Activated CD8-positive, alpha-beta T cell treated with anti-CD3 and anti-CD28 coated beads, Interleukin-2, amount 10 ng/mL, durations not matched to agents 7 days and 5 days (primary cell): ENCODE measurements at regions of chr17 and their contacts with region 1.

Region 1: GRCh38 chr17:15502369-15503112 is 35.1 kb upstream of the CDRT4 start:
- DNase-seq: peak; percentile 79
- ATAC-seq: peak; percentile 91
- H3K4me3 Mint-ChIP-seq: no peak overlapping the region
- H3K27ac Mint-ChIP-seq: no peak overlapping the region
- H3K4me1 Mint-ChIP-seq: peaks cover 9% of the 10 kb centered on the region
- H3K27me3 Mint-ChIP-seq: no peaks in the 10 kb centered on the region

Region 2: GRCh38 chr17:15247891-15248529 is 254.5 kb before region 1 on chr17:
- CTCF ChIA-PET with region 1: interaction called, 12 read pairs
- POLR2A ChIA-PET with region 1: no interaction called
- DNase-seq: no peak
- ATAC-seq: no peak
- H3K4me3 Mint-ChIP-seq: no peak overlapping the region
- H3K27ac Mint-ChIP-seq: no peak overlapping the region
- H3K4me1 Mint-ChIP-seq: no peaks in the 10 kb centered on the region
- H3K27me3 Mint-ChIP-seq: peaks cover 6% of the 10 kb centered on the region

Region 3: GRCh38 chr17:15257258-15257788 is 245.2 kb before region 1 on chr17:
- CTCF ChIA-PET with region 1: interaction called, 33 read pairs
- POLR2A ChIA-PET with region 1: no interaction called
- DNase-seq: peak; percentile 73
- ATAC-seq: peak; percentile 54
- H3K4me3 Mint-ChIP-seq: no peak overlapping the region
- H3K27ac Mint-ChIP-seq: no peak overlapping the region
- H3K4me1 Mint-ChIP-seq: peaks cover 30% of the 10 kb centered on the region
- H3K27me3 Mint-ChIP-seq: peaks cover 54% of the 10 kb centered on the region

Region 4: DNA sequence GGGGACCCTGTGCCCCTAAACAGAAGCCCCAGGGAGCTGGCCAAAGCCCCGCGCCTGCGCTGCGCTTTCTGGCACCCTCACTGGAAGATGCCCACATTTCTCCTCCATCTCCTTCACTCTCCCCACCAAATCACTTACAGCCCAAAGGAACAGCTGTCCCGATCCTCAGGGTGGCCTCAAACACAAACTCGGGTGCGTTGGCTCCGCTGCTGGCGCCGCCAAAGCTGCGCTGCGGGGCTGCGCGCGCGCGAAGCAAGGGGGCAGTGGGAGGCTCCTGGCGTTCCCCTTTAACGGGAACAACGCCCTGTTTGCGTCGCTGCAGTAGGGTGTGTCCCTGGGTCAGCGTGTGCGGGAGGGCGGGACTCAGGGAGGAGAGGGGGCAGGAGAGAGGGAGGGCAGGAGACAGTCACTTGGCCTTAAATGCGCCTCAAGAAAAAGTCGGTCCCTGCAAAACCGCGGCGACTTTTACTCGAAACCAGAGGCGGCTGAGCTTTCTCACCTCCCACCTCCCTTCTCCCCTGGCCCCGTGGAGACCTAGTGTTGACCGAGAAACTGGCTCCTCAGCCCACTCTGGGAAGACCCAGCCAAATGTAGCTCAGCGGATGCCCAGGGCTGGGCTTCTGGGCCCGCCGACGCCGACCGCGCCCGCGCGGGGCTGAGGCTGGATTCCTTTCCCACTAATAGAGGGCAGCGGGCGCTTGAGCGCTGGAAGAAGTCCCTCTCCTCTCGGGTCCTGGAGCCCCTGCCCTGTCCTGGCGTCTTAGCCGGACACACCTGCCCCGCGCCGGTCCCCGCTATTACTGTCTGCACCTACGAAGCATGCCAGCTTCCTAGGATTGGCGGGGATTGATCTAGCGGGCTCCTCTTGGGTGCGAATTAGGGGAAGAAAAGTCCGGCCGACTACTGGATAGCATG is 240.0 kb before region 1 on chr17:
- CTCF ChIA-PET with region 1: interaction called, 33 read pairs
- POLR2A ChIA-PET with region 1: no interaction called
- DNase-seq: no peak
- ATAC-seq: no peak
- H3K4me3 Mint-ChIP-seq: peak overlapping the region; percentile 22
- H3K27ac Mint-ChIP-seq: no peak overlapping the region
- H3K4me1 Mint-ChIP-seq: peaks cover 24% of the 10 kb centered on the region
- H3K27me3 Mint-ChIP-seq: peaks cover 68% of the 10 kb centered on the region

Region 5: DNA sequence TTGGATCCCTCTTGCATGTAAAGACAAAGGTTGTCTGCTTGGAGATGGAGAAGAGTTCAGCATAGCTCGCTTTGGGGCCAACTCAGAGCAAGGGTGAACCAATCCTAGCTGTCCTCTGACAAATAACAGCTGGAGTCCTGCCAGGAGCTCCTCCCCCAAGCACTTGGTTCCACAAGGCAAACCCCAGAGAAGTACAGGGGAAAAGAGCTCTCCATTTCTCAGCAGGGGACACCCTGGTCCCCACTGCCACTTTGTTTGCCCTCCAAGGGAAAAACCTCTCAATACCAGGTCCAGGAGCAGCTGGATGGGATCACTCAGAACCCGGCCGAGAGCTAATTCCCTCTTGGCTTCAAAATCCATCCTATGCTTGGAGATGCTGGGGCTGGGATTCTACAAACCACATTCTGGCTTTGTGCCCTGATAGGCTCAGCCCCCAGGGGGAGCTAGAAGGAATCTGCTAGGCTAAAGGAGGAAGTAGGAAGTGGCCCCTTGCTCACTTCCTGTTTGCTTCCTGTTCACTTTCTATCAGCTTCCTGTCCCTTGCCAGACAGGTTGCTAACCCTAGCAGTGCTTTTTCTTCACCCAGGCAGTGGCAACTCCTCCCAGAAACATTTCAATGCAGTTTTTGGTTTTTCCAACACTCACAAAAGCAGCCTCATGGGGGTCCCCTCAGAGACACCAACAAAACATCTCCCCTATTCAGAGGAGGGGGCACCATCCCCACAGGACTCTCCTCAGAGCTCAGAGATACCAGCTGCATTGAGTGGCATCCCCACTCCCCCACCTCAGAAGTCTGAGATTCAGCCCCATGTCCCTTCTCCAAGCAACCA is 65.9 kb before region 1 on chr17:
- CTCF ChIA-PET with region 1: interaction called, 20 read pairs
- POLR2A ChIA-PET with region 1: no interaction called
- DNase-seq: peak; percentile 64
- ATAC-seq: peak; percentile 51
- H3K4me3 Mint-ChIP-seq: no peak overlapping the region
- H3K27ac Mint-ChIP-seq: peak overlapping the region; percentile 84
- H3K4me1 Mint-ChIP-seq: peaks cover 18% of the 10 kb centered on the region
- H3K27me3 Mint-ChIP-seq: no peaks in the 10 kb centered on the region

Region 6: GRCh38 chr17:15488557-15488956 is 14.0 kb before region 1 on chr17:
- CTCF ChIA-PET with region 1: interaction called, 14 read pairs
- POLR2A ChIA-PET with region 1: no interaction called
- DNase-seq: no peak
- ATAC-seq: no peak
- H3K4me3 Mint-ChIP-seq: no peak overlapping the region
- H3K27ac Mint-ChIP-seq: no peak overlapping the region
- H3K4me1 Mint-ChIP-seq: peaks cover 9% of the 10 kb centered on the region
- H3K27me3 Mint-ChIP-seq: no peaks in the 10 kb centered on the region

Region 7: DNA sequence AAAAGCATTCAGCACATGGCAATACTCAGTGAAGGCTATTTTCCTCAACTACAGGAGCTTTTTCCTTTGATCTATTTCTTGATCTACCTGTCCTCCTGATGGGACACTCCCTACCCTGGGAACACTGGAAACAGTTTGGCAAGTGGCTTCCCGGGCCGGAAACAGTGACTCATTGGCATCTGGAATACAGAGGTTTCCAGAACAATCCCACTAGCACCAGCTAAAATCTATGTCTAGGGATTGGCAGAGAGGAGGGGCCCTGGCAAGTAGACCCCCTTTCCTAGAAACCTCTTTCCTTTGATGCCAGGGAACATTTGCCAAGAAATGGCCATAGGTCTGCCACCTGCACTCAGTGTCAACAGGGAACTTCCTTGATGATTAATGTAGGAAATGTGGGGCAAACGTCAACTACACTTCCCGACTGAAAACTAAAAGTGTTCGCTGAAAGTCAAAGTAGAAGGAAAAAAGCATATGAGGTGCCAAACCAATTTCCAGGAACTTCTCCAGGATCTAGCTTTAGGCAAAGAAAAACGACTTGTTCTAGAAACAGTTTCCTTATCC is 147.4 kb after region 1 on chr17:
- CTCF ChIA-PET with region 1: no interaction called
- POLR2A ChIA-PET with region 1: no interaction called
- DNase-seq: no peak
- ATAC-seq: no peak
- H3K4me3 Mint-ChIP-seq: no peak overlapping the region
- H3K27ac Mint-ChIP-seq: no peak overlapping the region
- H3K4me1 Mint-ChIP-seq: peaks cover 20% of the 10 kb centered on the region
- H3K27me3 Mint-ChIP-seq: no peaks in the 10 kb centered on the region